CD8-positive, alpha-beta T cell (primary cell): ENCODE measurements at regions of chr12 and their contacts with region 1.

Region 1: GRCh38 chr12:47032644-47033043 is 46.8 kb upstream of the PCED1B start:
- DNase-seq: peak in 3 of 9 experiments; percentile 13 to 82 (median 74)
- ATAC-seq: peak; percentile 72
- H3K4me3 ChIP-seq: no peak overlapping the region
- H3K4me3 Mint-ChIP-seq: no peak overlapping the region
- H3K27ac ChIP-seq: no peak overlapping the region
- H3K27ac Mint-ChIP-seq: no peak overlapping the region
- H3K4me1 ChIP-seq: peaks cover 5% of the 10 kb centered on the region
- H3K4me1 Mint-ChIP-seq: peaks cover 29% of the 10 kb centered on the region
- H3K27me3 ChIP-seq: no peaks in the 10 kb centered on the region
- H3K27me3 Mint-ChIP-seq: no peaks in the 10 kb centered on the region
- CTCF ChIP-seq: peak; percentile 74

Region 2: DNA sequence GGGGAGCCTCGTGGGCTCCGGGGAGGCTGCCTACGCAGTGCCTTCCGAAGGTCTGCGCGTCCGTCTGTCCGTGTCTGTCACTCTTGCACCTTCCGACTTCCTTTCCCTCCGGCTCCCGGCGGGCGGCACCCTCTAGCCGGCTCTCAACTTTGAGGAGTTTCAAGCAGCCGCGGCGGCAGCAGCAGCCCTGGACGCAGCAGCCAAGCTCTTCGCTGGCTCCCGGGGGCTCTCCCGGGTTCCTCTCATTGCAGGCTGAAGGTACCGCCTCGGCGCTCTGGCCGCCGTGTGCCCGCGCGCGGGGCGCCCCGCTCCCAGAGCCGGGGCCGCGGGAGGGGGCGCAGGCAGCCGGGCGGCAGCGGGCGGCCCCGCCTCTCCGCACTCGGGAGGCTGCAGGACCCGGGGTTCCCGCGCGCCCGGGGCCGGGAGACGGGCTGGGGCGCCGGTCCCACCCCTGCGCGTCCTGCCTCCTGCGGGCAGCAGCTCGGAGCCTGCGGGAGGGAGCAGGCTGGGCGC is 46.9 kb after region 1 on chr12 and contains the starts of genes AMIGO2 and PCED1B:
- CTCF ChIA-PET with region 1: interaction called, 19 read pairs
- POLR2A ChIA-PET with region 1: no interaction called
- intact Hi-C with region 1: loop called in 1 of 2 experiments (anchors 5 kb)
- DNase-seq: peak; percentile 13 to 81 (median 69)
- ATAC-seq: peak; percentile 54
- H3K4me3 ChIP-seq: peak within 1 kb of the TSS; percentile 85 to 92
- H3K4me3 Mint-ChIP-seq: peak within 1 kb of the TSS; percentile 98
- H3K27ac ChIP-seq: peak within 1 kb of the TSS; percentile 63 to 85
- H3K27ac Mint-ChIP-seq: peak within 1 kb of the TSS; percentile 96
- H3K4me1 ChIP-seq: peaks cover 55% of the 10 kb centered on the region
- H3K4me1 Mint-ChIP-seq: peaks cover 76% of the 10 kb centered on the region
- H3K27me3 ChIP-seq: no peaks in the 10 kb centered on the region
- H3K27me3 Mint-ChIP-seq: no peaks in the 10 kb centered on the region
- CTCF ChIP-seq: no peak
- total RNA-seq, gene AMIGO2: 12.5 to 13.5 TPM
- total RNA-seq, gene PCED1B: 32.9 to 33.7 TPM

Region 3: DNA sequence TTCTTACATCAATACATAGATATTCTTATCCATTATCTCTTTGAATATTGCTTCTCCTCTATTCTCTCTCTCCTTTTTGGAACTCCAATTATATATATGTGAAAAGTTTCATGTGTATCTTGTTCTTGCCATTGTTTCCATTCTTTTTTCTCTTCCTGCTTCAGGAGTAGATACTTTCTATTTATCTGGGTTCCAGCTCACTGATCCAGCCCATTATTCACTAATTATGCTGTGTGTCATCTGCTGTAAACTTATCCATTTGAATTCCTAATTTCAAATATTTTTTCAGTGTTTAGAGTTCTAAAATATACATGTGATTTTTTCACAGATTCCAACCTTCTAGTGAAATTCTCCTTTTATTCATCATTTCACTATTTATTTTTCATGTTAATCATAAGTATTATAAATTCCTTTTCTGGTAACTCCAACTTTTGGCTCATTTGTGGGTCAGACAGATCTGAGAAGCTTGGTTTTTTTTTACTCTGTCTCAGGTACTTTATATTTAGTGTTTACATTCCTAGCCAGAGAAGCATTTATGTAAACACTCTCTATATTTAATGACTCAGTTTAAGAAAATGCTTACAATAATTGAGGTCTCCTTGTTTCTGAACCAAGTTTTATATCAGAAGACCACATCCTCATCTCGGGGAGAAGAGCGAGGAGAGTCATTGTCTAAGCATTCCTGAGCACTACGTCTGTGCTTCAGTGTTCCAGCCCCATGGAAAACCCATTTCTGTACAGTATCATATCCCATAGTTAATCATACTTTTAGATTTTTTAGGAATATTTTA is 63.0 kb after region 1 on chr12:
- CTCF ChIA-PET with region 1: no interaction called
- POLR2A ChIA-PET with region 1: no interaction called
- intact Hi-C with region 1: no loop called
- DNase-seq: no peak
- ATAC-seq: no peak
- H3K4me3 ChIP-seq: no peak overlapping the region
- H3K4me3 Mint-ChIP-seq: no peak overlapping the region
- H3K27ac ChIP-seq: no peak overlapping the region
- H3K27ac Mint-ChIP-seq: no peak overlapping the region
- H3K4me1 ChIP-seq: peaks cover 24% of the 10 kb centered on the region
- H3K4me1 Mint-ChIP-seq: peaks cover 29% of the 10 kb centered on the region
- H3K27me3 ChIP-seq: no peaks in the 10 kb centered on the region
- H3K27me3 Mint-ChIP-seq: no peaks in the 10 kb centered on the region
- CTCF ChIP-seq: no peak

Region 4: DNA sequence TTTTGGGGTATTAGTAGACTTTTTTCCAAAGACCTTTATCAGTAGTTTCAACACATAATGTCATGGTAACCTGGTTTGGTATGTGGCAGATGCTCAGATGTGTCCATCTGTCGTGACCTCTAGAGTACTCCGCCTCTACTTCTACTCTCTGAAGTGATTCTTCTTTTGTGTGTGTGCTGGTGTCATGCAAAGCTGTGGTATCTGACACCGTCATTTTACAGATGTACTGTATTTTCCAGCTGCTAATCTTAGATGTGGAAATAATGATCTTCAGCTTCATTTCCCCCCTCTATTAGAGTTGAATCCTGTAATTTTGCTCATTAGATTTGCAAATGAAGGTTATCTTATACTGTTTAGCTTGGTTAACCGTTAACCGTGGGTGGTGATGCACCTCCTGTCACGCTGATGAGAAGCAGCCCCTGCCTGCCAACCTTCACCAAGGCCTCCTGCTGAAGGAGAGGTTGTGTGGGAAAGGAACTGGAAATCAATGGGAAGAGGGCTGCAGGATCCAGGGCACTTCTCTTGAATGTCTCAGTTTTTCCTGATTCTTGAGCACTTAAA is 269.5 kb after region 1 on chr12:
- CTCF ChIA-PET with region 1: interaction called, 15 read pairs
- POLR2A ChIA-PET with region 1: interaction called, 4 read pairs
- intact Hi-C with region 1: loop called (anchors 1 kb)
- DNase-seq: peak in 1 of 9 experiments; percentile 14
- ATAC-seq: no peak
- H3K4me3 ChIP-seq: no peak overlapping the region
- H3K4me3 Mint-ChIP-seq: peak overlapping the region; percentile 42
- H3K27ac ChIP-seq: no peak overlapping the region
- H3K27ac Mint-ChIP-seq: peak overlapping the region; percentile 80
- H3K4me1 ChIP-seq: peaks cover 39% of the 10 kb centered on the region
- H3K4me1 Mint-ChIP-seq: peaks cover 66% of the 10 kb centered on the region
- H3K27me3 ChIP-seq: no peaks in the 10 kb centered on the region
- H3K27me3 Mint-ChIP-seq: no peaks in the 10 kb centered on the region
- CTCF ChIP-seq: no peak

Region 5: DNA sequence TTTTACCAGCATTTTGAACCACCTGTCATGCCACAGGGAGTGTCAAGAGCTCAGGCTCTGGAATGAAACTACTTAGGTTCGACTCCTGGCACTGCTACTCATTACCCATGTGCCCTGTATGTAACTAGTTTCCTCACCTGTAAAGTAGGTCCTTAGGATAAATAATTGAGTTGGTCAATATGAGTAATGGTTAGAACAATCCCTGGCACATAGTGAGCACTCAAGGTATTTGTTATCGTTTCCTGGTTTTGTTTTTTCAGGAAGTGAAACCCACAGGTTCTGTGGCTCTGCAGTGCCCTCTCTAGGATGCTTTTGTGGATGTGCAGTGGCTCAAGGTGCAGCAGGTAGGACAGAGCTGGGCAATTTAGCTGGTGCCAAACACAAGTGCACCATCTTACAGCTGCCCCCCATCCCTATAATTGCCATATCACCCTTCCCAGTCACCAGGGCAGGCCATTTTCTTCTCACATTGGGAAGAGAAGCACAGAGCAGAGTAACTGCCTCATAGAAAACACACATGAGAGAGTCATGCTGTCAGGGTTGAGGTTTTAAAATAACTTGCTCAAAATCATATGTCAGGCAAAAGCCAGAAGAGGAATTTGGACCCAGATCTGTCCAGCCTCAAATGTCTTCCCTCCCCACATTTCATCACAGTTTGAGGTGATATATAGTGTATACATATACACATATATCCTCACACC is 375.7 kb after region 1 on chr12:
- CTCF ChIA-PET with region 1: interaction called, 45 read pairs
- POLR2A ChIA-PET with region 1: interaction called, 4 read pairs
- intact Hi-C with region 1: loop called in 1 of 2 experiments (anchors 1 kb)
- DNase-seq: peak in 6 of 9 experiments; percentile 24 to 74 (median 51)
- ATAC-seq: peak; percentile 67
- H3K4me3 ChIP-seq: peak overlapping the region in 1 of 2 experiments; percentile 12
- H3K4me3 Mint-ChIP-seq: no peak overlapping the region
- H3K27ac ChIP-seq: no peak overlapping the region
- H3K27ac Mint-ChIP-seq: peak overlapping the region; percentile 73
- H3K4me1 ChIP-seq: peaks cover 64% of the 10 kb centered on the region
- H3K4me1 Mint-ChIP-seq: peaks cover 77% of the 10 kb centered on the region
- H3K27me3 ChIP-seq: no peaks in the 10 kb centered on the region
- H3K27me3 Mint-ChIP-seq: no peaks in the 10 kb centered on the region
- CTCF ChIP-seq: peak; percentile 40

Region 6: DNA sequence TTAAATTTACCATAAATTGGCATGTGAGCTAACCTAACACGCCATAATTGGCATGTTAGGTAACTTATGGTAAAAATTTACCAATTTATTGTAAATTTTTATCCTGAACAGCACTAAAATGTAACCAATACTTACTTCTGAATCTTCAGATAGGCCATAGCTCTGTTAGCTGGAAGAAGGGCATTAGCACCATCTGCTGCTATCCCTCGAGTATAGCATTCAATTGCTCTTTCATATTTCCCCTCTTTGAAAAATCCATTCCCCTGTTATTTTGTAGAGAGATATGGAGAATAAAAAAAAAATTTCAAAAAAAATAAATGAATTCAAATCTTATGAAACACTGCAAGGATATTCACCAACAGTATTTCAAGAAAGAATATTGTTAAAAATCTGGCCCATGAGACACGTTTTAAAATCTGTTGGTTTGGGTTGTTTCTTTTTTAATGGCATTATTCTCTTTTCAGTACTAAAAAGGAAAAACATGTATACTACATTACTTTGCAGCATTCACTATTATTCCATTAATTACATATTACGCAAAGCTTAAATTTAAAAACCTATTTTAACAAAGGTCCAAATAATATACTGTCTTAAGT is 654.1 kb after region 1 on chr12:
- CTCF ChIA-PET with region 1: interaction called, 23 read pairs
- POLR2A ChIA-PET with region 1: no interaction called
- intact Hi-C with region 1: loop called (anchors 1 kb)
- DNase-seq: peak in 3 of 9 experiments; percentile 21 to 61 (median 42)
- ATAC-seq: peak; percentile 66
- H3K4me3 ChIP-seq: no peak overlapping the region
- H3K4me3 Mint-ChIP-seq: no peak overlapping the region
- H3K27ac ChIP-seq: no peak overlapping the region
- H3K27ac Mint-ChIP-seq: no peak overlapping the region
- H3K4me1 ChIP-seq: no peaks in the 10 kb centered on the region
- H3K4me1 Mint-ChIP-seq: peaks cover 16% of the 10 kb centered on the region
- H3K27me3 ChIP-seq: no peaks in the 10 kb centered on the region
- H3K27me3 Mint-ChIP-seq: no peaks in the 10 kb centered on the region
- CTCF ChIP-seq: peak; percentile 76